Right ventricle myocardium superior (tissue), 1 donor: ENCODE measurements at regions of chr2 and their contacts with region 1.

Region 1: GRCh38 chr2:162297925-162298552 is 20.4 kb downstream of the IFIH1 start:
- DNase-seq: no peak
- ATAC-seq: peak; percentile 64

Region 2: DNA sequence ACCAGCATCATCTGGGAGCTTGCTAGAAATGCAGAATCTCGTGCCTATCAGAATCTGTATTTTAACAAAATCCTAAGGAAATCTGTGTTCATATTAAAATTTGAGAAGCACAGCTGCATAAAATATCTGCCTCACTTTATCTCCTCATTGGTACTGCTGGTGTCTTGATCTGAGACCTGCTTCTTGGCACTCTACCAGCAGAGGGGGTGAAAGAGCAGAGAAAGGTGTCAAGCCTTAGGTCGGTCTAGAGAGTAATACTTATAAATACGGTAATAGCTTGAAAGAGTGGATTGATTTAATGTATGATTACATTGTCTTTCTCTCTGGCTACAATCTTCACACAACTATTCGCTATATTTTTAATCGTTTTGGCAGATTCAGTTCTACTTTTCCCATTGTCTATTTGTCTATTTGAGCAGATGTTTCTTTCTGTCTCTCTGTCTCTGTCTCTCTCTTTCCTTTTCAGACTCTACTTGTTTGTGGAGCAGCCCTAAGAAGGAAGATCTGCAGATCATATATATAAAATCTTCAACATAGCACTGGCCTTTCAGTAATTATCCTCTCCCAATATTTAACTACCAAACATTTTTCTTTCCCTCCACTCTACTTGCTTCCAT is 144.3 kb before region 1 on chr2:
- intact Hi-C with region 1: loop called (anchors 10 kb)
- DNase-seq: no peak
- ATAC-seq: no peak

Region 3: GRCh38 chr2:162184821-162185446 is 113.1 kb before region 1 on chr2:
- intact Hi-C with region 1: no loop called
- DNase-seq: no peak
- ATAC-seq: no peak

Region 4: GRCh38 chr2:162210385-162210784 is 87.7 kb before region 1 on chr2:
- intact Hi-C with region 1: no loop called
- DNase-seq: no peak
- ATAC-seq: no peak

Region 5: DNA sequence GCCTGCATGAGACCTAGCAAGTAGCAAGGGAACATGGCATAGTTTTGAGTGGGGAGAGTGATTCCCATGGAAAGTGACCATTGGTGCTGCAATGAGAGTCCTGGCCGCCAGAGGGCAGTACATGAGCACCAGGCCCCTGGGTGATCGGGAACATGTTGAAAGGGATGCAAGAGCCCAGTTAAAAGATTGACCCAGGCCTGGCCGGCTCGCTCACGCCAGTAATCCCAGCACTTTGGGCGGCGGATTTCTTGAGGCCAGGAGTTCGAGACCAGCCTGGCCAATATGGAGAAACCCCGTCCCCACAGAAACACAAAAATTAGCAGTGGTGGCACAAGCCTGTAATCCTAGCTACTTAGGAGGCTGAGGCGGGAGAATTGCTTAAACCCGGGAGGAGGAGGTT is 77.0 kb before region 1 on chr2:
- intact Hi-C with region 1: loop called (anchors 5 kb)
- DNase-seq: peak; percentile 75
- ATAC-seq: peak; percentile 79

Region 6: DNA sequence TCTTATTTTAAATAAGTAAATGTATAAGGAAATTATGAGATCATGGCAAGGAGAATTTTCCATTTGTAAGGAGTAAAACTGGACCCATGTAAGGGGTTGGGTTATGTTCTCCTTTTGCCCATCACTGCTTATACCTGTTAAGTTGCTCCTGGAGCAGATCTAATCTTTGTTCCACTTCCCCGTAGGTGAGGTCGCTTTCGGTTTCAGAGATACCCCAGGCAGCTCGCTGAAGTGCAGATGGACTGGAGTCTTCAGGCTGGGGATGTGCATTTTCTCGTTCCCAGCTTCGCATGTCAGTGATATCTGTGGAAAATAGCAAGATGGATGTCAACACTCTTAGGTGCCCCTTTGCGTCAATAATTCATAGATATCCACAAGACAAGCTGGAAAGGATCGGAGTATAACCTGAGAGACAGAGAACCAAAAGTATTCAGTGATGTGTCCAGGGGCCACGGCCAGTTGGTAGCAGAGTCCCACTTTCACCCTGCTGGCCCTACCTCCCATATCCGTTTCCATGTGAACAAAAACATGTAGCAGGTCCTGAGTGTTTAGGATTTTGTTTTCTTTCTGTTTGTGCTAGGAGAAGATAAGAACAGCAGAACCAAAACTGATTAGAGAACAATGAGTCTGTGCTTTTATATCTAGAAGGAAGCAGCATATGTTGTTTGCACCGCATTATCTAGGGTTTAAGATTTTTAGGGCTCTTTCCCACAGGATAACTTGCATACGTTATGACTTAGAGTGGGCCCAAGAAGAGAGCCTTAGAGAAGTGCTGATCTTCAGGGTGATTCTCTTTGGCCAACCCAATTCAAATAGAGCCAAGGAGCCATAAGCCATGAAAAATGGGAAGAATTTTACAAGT is 81.9 kb after region 1 on chr2:
- intact Hi-C with region 1: no loop called
- DNase-seq: no peak
- ATAC-seq: no peak